Body of pancreas (tissue), 4 donors: ENCODE measurements at regions of chr18 and their contacts with region 1.

Region 1: GRCh38 chr18:22563098-22563707 is 145.5 kb upstream of the CTAGE1 start:
- DNase-seq: peak; percentile 36 to 63 (median 44)
- ATAC-seq: peak; percentile 73
- H3K4me3 ChIP-seq: no peak overlapping the region
- H3K27ac ChIP-seq: no peak overlapping the region
- H3K4me1 ChIP-seq: peaks cover 16% of the 10 kb centered on the region
- H3K27me3 ChIP-seq: no peaks in the 10 kb centered on the region
- CTCF ChIP-seq: peak; percentile 58 to 90 (median 89)
- POLR2A ChIP-seq: no peak

Region 2: DNA sequence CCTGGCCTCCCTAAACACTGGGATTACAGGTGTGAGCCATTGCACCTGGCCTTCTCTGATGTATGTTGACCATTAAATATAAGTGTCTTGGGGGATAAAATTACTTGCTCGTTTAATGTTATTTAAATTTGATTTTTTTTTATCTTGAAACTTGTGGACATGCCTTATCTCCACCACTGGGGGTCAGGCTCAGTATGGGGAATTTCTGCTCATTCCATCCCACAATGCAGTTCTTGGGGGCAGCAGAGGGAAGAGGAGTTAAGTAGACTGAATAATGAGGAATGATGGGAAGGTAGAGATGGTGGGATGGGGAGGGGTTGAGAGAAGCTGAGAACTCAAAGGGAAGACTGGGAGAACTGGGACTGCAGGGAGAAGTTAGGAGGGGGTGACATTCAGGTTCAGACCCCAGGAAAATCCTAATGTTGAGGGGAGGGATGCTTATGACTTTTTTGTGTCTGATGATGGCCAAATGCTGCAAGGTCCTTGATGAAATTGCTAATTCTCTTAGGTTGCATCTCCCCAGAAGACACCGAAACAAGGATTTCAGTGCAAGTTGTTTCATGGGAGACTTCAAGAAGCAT is 648.4 kb before region 1 on chr18:
- intact Hi-C with region 1: loop called (anchors 5 kb)
- DNase-seq: peak; percentile 37 to 54 (median 46)
- ATAC-seq: peak; percentile 69
- H3K4me3 ChIP-seq: no peak overlapping the region
- H3K27ac ChIP-seq: no peak overlapping the region
- H3K4me1 ChIP-seq: no peaks in the 10 kb centered on the region
- H3K27me3 ChIP-seq: no peaks in the 10 kb centered on the region
- CTCF ChIP-seq: peak; percentile 41 to 87 (median 74)
- POLR2A ChIP-seq: no peak

Region 3: DNA sequence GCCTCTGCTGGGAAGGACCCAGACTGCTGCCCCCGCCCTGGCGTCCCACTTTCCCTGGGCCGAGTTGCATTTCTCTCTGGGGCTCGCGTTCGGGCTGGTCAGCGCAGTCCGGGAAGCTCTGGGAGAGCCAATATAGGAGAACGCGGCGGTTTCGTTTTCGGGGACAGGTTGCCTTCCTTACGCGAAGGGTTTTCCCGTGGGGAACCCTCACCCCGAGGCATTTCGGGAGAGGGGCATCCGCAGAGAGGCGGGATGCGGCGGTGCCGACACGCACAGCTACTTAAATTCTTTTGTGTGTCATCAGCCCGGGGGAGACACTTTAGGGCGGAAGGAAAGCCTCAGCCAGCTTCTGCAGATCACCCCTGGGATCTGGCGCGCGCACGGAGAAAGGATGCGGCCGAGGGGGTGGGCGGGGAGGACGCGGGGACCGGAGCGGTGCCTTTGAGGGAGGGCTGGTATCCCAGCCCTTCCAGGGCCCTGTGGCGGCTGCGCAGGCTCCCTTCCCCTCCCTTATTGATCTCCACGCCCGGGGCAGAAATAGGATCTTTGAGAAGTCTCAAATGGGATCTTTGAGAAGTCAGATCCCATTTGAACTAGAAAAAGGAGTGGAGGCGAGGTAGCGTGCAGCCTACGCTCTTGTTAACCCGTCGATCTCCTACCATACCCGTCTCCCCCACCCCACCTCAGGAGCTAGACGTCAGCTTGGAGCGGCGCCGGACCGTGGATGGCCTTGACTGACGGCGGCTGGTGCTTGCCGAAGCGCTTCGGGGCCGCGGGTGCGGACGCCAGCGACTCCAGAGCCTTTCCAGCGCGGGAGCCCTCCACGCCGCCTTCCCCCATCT is 392.6 kb before region 1 on chr18:
- intact Hi-C with region 1: loop called (anchors 10 kb)
- DNase-seq: peak; percentile 67 to 79 (median 72)
- ATAC-seq: no peak
- H3K4me3 ChIP-seq: peak overlapping the region; percentile 89 to 97
- H3K27ac ChIP-seq: peak overlapping the region; percentile 95 to 100 (median 98)
- H3K4me1 ChIP-seq: peaks cover 7% of the 10 kb centered on the region
- H3K27me3 ChIP-seq: no peaks in the 10 kb centered on the region
- CTCF ChIP-seq: no peak
- POLR2A ChIP-seq: peak in 1 of 3 donors; percentile 18

Region 4: GRCh38 chr18:22282311-22283112 is 280.7 kb before region 1 on chr18:
- intact Hi-C with region 1: no loop called
- DNase-seq: no peak
- ATAC-seq: peak; percentile 86
- H3K4me3 ChIP-seq: no peak overlapping the region
- H3K27ac ChIP-seq: peak overlapping the region in 3 of 4 donors; percentile 58 to 79 (median 70)
- H3K4me1 ChIP-seq: peaks cover 11% of the 10 kb centered on the region
- H3K27me3 ChIP-seq: no peaks in the 10 kb centered on the region
- CTCF ChIP-seq: peak in 1 of 7 experiments; percentile 9
- POLR2A ChIP-seq: no peak

Region 5: DNA sequence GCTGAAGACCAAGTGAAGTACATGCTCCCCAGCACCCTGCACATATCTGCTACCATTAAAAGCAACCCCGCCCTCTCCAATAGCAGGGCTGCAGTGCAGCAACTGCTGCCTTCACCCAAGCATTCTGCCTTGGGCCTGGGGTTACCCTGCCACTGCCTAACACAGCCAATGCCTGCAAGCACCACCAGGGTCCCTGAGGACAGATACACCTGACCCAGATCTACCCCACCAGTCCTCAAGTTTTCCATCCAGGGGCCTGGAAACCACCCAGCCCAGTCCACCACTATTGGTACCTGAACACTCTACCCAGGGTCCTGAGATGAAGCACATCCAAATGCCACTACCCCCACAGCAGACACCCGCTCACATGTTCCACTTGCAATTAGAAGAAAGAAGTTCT is 188.8 kb after region 1 on chr18:
- intact Hi-C with region 1: no loop called
- DNase-seq: no peak
- ATAC-seq: no peak
- H3K4me3 ChIP-seq: no peak overlapping the region
- H3K27ac ChIP-seq: no peak overlapping the region
- H3K4me1 ChIP-seq: no peaks in the 10 kb centered on the region
- H3K27me3 ChIP-seq: no peaks in the 10 kb centered on the region
- CTCF ChIP-seq: no peak
- POLR2A ChIP-seq: no peak